ENCODE measurements at regions of chr1 and their contacts with region 1.

Region 1: DNA sequence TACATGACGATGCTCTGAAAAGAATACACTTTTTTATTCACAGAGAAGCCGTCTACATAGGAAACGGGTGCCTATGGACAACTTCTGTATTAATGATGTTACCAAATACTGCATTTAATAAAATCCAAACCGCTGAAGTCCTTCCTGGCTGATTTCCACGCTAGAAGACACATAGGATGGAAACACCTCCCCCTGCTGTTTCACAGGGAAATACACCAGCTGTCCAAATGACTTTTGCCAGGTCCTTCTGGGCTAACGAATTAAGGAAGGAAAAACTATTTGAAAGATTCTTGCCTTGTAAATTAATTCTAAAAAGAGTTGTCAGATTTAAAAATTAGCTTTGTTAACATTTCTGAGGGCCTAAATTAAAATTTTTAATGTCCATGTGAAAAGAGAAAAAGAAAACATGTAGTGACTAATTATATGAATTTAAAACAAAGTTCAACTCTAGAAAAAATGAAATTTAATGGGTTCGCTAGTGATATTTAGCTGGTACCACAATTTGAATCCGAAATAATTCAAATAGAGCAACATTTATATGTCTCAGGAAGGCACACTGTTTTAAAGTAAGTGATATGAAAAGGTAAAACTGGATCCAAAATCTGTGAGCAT is 146.0 kb downstream of the RERE start:
- DNase-seq: peak; percentile 32
- H3K4me3 Mint-ChIP-seq: no peak overlapping the region
- H3K27ac Mint-ChIP-seq: no peak overlapping the region
- H3K4me1 Mint-ChIP-seq: peaks cover 39% of the 10 kb centered on the region
- H3K27me3 Mint-ChIP-seq: no peaks in the 10 kb centered on the region

Region 2: GRCh38 chr1:8604041-8604945 is 67.1 kb before region 1 on chr1:
- CTCF ChIA-PET with region 1: interaction called, 13 read pairs
- DNase-seq: peak; percentile 65
- H3K4me3 Mint-ChIP-seq: peak overlapping the region; percentile 51
- H3K27ac Mint-ChIP-seq: peak overlapping the region; percentile 97
- H3K4me1 Mint-ChIP-seq: peaks cover 46% of the 10 kb centered on the region
- H3K27me3 Mint-ChIP-seq: no peaks in the 10 kb centered on the region

Region 3: GRCh38 chr1:8684590-8684989 is 13.2 kb after region 1 on chr1:
- CTCF ChIA-PET with region 1: interaction called, 10 read pairs
- DNase-seq: no peak
- H3K4me3 Mint-ChIP-seq: no peak overlapping the region
- H3K27ac Mint-ChIP-seq: no peak overlapping the region
- H3K4me1 Mint-ChIP-seq: peaks cover 45% of the 10 kb centered on the region
- H3K27me3 Mint-ChIP-seq: no peaks in the 10 kb centered on the region

Region 4: DNA sequence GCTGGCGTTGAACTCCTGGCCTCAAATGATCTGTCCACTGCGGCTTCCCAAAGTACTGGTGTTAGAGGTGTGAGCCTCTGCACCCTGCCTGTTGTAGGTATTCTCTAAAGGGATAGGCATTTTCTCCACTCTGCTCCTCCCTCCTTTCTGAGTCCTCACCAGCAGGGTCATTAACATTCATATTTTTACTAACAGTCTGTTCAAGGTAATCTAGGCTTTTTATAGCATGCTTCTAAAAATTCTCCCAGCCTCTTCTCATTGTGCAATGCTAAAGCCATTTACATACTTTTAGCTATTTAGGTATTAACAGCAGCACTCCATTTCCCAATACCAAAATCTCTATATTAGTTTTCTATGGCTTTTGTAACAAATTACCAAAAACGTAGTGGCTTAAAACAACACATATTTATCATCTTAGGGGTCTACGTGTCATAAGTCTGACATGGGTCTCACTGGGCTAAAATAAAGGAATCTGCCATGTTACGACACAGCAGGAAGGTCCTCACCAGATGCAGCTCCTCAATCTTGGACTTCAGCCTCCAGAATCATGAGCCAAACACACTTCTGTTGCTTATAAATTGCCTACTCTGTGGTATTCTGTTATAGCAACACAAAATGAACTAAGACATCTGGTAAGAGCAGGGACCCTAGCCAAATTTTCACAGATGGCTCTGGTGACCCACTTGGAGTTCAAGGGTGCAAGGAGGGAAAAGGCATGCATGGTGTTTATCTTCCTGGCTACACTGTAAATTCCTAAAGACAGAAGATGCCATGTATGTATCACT is 357.7 kb after region 1 on chr1:
- CTCF ChIA-PET with region 1: no interaction called
- DNase-seq: no peak
- H3K4me3 Mint-ChIP-seq: no peak overlapping the region
- H3K27ac Mint-ChIP-seq: no peak overlapping the region
- H3K4me1 Mint-ChIP-seq: no peaks in the 10 kb centered on the region
- H3K27me3 Mint-ChIP-seq: peaks cover 51% of the 10 kb centered on the region